Panc1 (cell line): ENCODE measurements at regions of chr15 and their contacts with region 1.

Region 1: GRCh38 chr15:57306161-57306943 is 70.0 kb upstream of the CGNL1 start:
- DNase-seq: peak; percentile 30
- ATAC-seq: peak; percentile 94
- H3K4me3 ChIP-seq: peak overlapping the region; percentile 52 to 58
- H3K27ac ChIP-seq: peak overlapping the region; percentile 39; the same call in 1 of the 2 replicates
- H3K4me1 ChIP-seq: 0 out of 2 replicates have a peak, but pooled peaks cover 4% of the 10 kb centered on the region
- H3K27me3 ChIP-seq: no peaks in the 10 kb centered on the region
- CTCF ChIP-seq: peak; percentile 97

Region 2: GRCh38 chr15:56496635-56497034 is 809.7 kb before region 1 on chr15:
- CTCF ChIA-PET with region 1: interaction called, 5 read pairs
- POLR2A ChIA-PET with region 1: no interaction called
- in situ Hi-C with region 1: no loop called
- intact Hi-C with region 1: loop called (anchors 2 kb)
- DNase-seq: peak; percentile 64
- ATAC-seq: peak; percentile 96
- H3K4me3 ChIP-seq: no peak overlapping the region
- H3K27ac ChIP-seq: no peak overlapping the region
- H3K4me1 ChIP-seq: no peaks in the 10 kb centered on the region
- H3K27me3 ChIP-seq: no peaks in the 10 kb centered on the region
- CTCF ChIP-seq: peak; percentile 75

Region 3: GRCh38 chr15:56821721-56822425 is 484.5 kb before region 1 on chr15:
- CTCF ChIA-PET with region 1: no interaction called
- POLR2A ChIA-PET with region 1: no interaction called
- in situ Hi-C with region 1: no loop called
- intact Hi-C with region 1: loop called (anchors 5 kb)
- DNase-seq: peak; percentile 25
- ATAC-seq: peak; percentile 92
- H3K4me3 ChIP-seq: no peak overlapping the region
- H3K27ac ChIP-seq: no peak overlapping the region
- H3K4me1 ChIP-seq: no peaks in the 10 kb centered on the region; the same call in 1 of the 2 replicates
- H3K27me3 ChIP-seq: no peaks in the 10 kb centered on the region
- CTCF ChIP-seq: peak; percentile 78

Region 4: DNA sequence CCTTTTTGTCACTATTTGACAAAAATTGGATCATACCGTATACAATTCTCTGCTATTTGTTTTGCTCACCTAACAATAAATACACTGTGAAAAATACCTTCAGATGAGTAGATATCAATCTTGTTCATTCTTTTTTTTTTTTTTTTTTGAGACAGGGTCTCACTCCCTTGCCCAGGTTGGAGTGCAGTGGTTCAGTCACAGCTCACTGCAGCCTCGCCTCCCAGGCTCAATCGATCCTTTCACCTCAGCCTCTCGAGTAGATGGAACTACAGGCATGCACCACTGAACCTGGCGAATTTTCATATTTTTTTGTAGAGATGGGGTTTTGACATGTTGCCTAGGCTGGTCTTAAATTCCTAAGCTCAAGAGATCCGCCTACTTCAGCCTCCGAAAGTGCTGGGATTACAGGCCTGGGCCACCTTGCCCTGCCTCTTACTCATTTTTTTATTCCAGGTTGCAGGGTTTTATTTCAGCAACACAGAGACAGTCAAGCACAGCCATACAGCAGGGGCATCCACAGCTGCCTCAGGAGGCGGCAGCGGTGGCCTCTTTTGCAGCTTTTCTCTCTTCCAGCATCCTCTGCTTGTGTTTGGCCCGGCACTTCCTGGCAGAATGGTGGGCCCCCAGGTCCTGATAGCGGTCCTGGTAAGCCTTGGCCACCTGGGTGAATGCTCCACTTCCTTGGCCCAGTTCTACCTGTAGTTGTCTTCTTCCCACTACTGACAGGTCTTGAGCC is 18.8 kb after region 1 on chr15:
- CTCF ChIA-PET with region 1: interaction called, 17 read pairs
- POLR2A ChIA-PET with region 1: no interaction called
- in situ Hi-C with region 1: no loop called
- intact Hi-C with region 1: no loop called
- DNase-seq: no peak
- ATAC-seq: peak; percentile 23; the same call in 1 of the 2 replicates
- H3K4me3 ChIP-seq: no peak overlapping the region
- H3K27ac ChIP-seq: no peak overlapping the region
- H3K4me1 ChIP-seq: no peaks in the 10 kb centered on the region; the same call in 1 of the 2 replicates
- H3K27me3 ChIP-seq: 0 out of 2 replicates have a peak, but pooled peaks cover 3% of the 10 kb centered on the region
- CTCF ChIP-seq: no peak